Natural killer cell (primary cell): ENCODE measurements at regions of chr21 and their contacts with region 1.

Region 1: GRCh38 chr21:35051287-35051818 is 2.3 kb upstream of the RUNX1 start:
- DNase-seq: peak; percentile 81 to 93
- ATAC-seq: peak; percentile 46 to 69 (median 59)
- H3K4me3 ChIP-seq: no peak overlapping the region
- H3K4me3 Mint-ChIP-seq: peak overlapping the region; percentile 92
- H3K27ac ChIP-seq: peak overlapping the region; percentile 57
- H3K27ac Mint-ChIP-seq: peak overlapping the region; percentile 95 to 97
- H3K4me1 ChIP-seq: peaks cover 39% of the 10 kb centered on the region
- H3K4me1 Mint-ChIP-seq: peaks cover 59 to 64% of the 10 kb centered on the region in 2 donors
- H3K27me3 ChIP-seq: no peaks in the 10 kb centered on the region
- H3K27me3 Mint-ChIP-seq: peaks cover 0 to 5% of the 10 kb centered on the region in 2 donors
- CTCF ChIP-seq: peak; percentile 71

Region 2: DNA sequence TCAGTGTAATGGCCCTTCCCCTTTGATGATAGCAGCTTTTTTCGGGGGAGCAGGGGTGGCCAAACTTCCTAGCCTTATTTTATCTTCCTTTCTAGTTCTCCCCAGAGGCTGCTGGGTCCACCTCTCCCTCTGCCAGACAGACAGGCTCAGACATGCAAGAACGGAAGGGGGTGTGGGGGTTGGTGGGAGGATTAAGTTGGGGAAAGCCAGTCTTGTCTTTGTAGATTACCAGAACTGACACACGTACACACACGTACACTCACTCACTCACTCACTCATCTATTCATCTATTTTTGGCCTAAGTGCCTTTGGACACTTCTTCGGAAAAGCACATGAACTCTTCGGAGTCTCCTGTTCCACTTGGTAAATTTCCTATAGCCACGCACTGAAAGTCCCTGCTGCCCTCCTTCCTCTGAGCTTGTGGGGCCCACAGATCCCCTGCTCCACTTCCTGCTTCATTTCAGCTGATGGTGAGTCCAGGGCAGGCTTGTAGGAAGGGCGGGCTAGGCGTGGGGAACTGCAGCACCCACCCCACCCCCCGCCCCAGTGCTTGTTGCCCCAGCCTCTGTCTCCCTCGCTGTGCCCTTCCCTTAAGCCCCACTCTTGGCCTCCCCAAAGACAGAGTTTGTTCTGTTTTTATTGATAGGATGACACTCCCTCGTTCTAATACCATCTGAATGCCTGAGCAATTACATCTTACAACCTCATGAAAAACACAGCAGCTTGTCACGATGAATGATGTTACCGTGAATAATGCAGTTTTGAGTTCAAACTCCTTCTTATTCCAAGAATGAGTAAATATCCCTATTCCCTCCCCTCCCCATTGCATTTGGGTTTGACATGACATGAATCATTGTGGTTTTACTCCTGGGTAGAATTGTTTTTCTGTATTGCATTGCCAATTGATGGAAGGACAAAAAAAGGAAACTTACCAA is 1075.0 kb before region 1 on chr21:
- intact Hi-C with region 1: loop called (anchors 5 kb)
- DNase-seq: peak; percentile 26 to 75
- ATAC-seq: peak; percentile 43 to 60 (median 53)
- H3K4me3 ChIP-seq: no peak overlapping the region
- H3K4me3 Mint-ChIP-seq: peak overlapping the region; percentile 76
- H3K27ac ChIP-seq: peak overlapping the region; percentile 95
- H3K27ac Mint-ChIP-seq: peak overlapping the region; percentile 93 to 98
- H3K4me1 ChIP-seq: peaks cover 44% of the 10 kb centered on the region
- H3K4me1 Mint-ChIP-seq: peaks cover 61 to 66% of the 10 kb centered on the region in 2 donors
- H3K27me3 ChIP-seq: no peaks in the 10 kb centered on the region
- H3K27me3 Mint-ChIP-seq: no peaks in the 10 kb centered on the region
- CTCF ChIP-seq: no peak

Region 3: GRCh38 chr21:34801519-34802132 is 249.7 kb before region 1 on chr21:
- intact Hi-C with region 1: loop called (anchors 2 kb)
- DNase-seq: peak in 1 of 2 donors; percentile 53
- ATAC-seq: peak; percentile 51 to 59 (median 54)
- H3K4me3 ChIP-seq: no peak overlapping the region
- H3K4me3 Mint-ChIP-seq: no peak overlapping the region
- H3K27ac ChIP-seq: no peak overlapping the region
- H3K27ac Mint-ChIP-seq: peak overlapping the region; percentile 70 to 78
- H3K4me1 ChIP-seq: peaks cover 6% of the 10 kb centered on the region
- H3K4me1 Mint-ChIP-seq: peaks cover 51 to 59% of the 10 kb centered on the region in 2 donors
- H3K27me3 ChIP-seq: no peaks in the 10 kb centered on the region
- H3K27me3 Mint-ChIP-seq: no peaks in the 10 kb centered on the region
- CTCF ChIP-seq: no peak

Region 4: GRCh38 chr21:34933609-34934335 is 117.6 kb before region 1 on chr21:
- intact Hi-C with region 1: loop called (anchors 1 kb)
- DNase-seq: peak in 1 of 2 donors; percentile 83
- ATAC-seq: peak; percentile 88 to 93 (median 91)
- H3K4me3 ChIP-seq: peak overlapping the region; percentile 11
- H3K4me3 Mint-ChIP-seq: peak overlapping the region; percentile 78
- H3K27ac ChIP-seq: peak overlapping the region; percentile 89
- H3K27ac Mint-ChIP-seq: peak overlapping the region; percentile 93
- H3K4me1 ChIP-seq: peaks cover 29% of the 10 kb centered on the region
- H3K4me1 Mint-ChIP-seq: peaks cover 62 to 80% of the 10 kb centered on the region in 2 donors
- H3K27me3 ChIP-seq: no peaks in the 10 kb centered on the region
- H3K27me3 Mint-ChIP-seq: no peaks in the 10 kb centered on the region
- CTCF ChIP-seq: no peak

Region 5: DNA sequence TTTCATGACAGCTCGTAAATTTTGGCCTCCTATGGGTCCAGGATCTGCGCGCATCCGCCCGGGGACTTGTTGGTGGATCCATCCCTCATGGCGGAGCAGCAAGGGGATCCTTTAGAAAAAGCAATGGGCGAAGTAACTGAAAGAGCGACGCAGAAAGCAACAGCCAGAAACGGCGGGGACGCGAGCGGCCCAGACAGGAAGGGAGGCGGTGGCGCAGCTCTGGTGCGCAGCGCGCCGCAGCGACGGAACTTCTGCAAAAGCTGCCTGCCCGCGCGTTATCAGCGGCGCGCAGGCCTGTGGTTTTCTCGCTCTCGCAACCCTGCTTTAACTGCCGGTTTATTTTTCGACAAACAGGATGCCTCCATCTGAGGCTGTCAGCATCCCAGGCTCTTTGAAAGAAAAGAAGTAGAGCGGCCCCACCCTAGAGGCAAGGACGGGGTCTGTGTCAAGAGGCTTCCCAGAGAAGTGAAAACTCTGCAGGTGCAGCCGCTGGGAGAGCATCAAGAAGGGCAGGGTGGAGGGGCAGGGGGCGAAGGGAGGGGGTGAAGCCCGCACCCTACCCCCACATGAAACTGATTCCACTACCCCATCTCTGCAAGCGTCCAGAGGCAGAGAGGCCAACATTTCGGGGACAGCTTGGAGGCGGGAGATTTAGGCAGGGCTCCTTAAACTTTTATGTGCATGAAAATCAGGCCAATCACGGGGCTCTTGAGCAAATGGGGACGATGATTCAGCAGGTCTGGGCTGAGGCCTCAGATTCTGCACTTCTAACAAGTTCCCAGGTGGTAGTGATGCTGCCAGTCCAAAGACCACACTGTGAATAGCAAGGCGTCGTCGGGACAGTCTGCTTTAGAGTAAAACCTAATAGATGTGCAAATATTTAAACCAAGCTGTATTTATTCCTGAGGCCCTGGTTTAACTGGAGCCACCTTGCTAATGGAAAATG is 24.5 kb before region 1 on chr21:
- intact Hi-C with region 1: loop called (anchors 1 kb)
- DNase-seq: peak; percentile 78 to 95
- ATAC-seq: peak; percentile 81 to 91 (median 87)
- H3K4me3 ChIP-seq: peak overlapping the region; percentile 29
- H3K4me3 Mint-ChIP-seq: peak overlapping the region; percentile 89
- H3K27ac ChIP-seq: peak overlapping the region; percentile 85
- H3K27ac Mint-ChIP-seq: peak overlapping the region; percentile 97 to 98
- H3K4me1 ChIP-seq: peaks cover 70% of the 10 kb centered on the region
- H3K4me1 Mint-ChIP-seq: peaks cover 78 to 86% of the 10 kb centered on the region in 2 donors
- H3K27me3 ChIP-seq: no peaks in the 10 kb centered on the region
- H3K27me3 Mint-ChIP-seq: no peaks in the 10 kb centered on the region
- CTCF ChIP-seq: no peak

Region 6: DNA sequence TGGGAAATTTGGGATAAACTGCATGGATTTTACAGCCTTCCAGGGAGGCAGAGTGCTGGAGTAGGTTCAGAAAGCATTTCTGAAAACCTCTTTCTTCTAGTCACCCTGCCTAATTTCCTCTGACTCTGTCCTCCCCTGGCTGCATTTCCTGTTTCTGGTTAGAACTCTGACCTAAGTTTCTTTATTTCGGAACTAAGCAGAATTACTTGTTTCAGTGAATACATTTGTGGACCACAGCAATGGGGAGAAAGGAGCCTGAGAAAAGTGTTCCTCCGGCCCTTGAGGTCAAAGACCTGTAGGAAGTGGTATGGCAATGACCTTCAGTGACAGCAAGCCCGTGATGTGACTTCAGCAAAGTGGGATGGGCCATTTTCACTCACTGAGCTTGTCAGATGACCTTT is 171.2 kb after region 1 on chr21:
- intact Hi-C with region 1: loop called (anchors 2 kb)
- DNase-seq: peak in 1 of 2 donors; percentile 32
- ATAC-seq: peak; percentile 38 to 70 (median 63)
- H3K4me3 ChIP-seq: no peak overlapping the region
- H3K4me3 Mint-ChIP-seq: peak overlapping the region; percentile 26
- H3K27ac ChIP-seq: no peak overlapping the region
- H3K27ac Mint-ChIP-seq: peak overlapping the region; percentile 5 to 79
- H3K4me1 ChIP-seq: peaks cover 30% of the 10 kb centered on the region
- H3K4me1 Mint-ChIP-seq: peaks cover 31 to 54% of the 10 kb centered on the region in 2 donors
- H3K27me3 ChIP-seq: no peaks in the 10 kb centered on the region
- H3K27me3 Mint-ChIP-seq: peaks cover 0 to 4% of the 10 kb centered on the region in 2 donors
- CTCF ChIP-seq: no peak

Region 7: DNA sequence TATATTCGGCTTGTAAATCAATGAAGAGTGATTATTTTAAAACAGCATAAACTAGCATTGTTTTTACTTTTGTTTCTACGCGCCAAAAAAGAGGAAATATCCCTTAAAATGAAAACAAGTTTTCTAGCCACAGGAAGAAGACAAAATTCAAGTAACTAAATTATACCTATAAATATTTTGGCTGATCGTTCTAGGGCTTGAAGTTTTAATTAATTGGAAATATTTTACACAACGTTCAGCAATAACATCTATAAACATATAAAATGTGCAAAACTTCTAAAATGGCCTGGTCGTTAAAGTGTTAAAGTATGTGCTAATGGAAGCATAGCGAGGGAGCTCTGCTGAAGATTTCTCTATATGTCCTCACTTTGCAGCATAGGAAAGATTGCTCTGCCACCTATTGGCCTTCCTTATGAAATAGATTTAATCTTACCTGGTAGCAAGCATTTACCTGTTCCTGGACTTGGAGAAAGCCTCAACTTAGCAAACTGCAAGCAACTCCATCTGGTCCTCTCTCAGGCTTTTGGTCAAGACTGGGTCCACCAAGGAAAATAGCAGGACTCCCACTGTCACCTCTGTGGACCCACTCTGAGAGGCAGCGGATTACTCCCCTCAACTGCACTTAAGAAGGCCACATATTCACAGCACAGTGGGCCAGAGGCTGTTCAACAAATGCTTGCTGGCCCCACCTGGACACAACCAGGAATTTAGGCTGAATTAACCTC is 349.0 kb after region 1 on chr21:
- intact Hi-C with region 1: loop called (anchors 1 kb)
- DNase-seq: peak; percentile 15 to 81
- ATAC-seq: peak; percentile 64 to 83 (median 77)
- H3K4me3 ChIP-seq: no peak overlapping the region
- H3K4me3 Mint-ChIP-seq: no peak overlapping the region
- H3K27ac ChIP-seq: no peak overlapping the region
- H3K27ac Mint-ChIP-seq: no peak overlapping the region
- H3K4me1 ChIP-seq: no peaks in the 10 kb centered on the region
- H3K4me1 Mint-ChIP-seq: no peaks in the 10 kb centered on the region
- H3K27me3 ChIP-seq: no peaks in the 10 kb centered on the region
- H3K27me3 Mint-ChIP-seq: peaks cover 17 to 33% of the 10 kb centered on the region in 2 donors
- CTCF ChIP-seq: peak; percentile 62

Region 8: GRCh38 chr21:35579520-35580293 is 528.4 kb after region 1 on chr21:
- intact Hi-C with region 1: no loop called
- DNase-seq: no peak
- ATAC-seq: no peak
- H3K4me3 ChIP-seq: no peak overlapping the region
- H3K4me3 Mint-ChIP-seq: no peak overlapping the region
- H3K27ac ChIP-seq: no peak overlapping the region
- H3K27ac Mint-ChIP-seq: no peak overlapping the region
- H3K4me1 ChIP-seq: no peaks in the 10 kb centered on the region
- H3K4me1 Mint-ChIP-seq: no peaks in the 10 kb centered on the region
- H3K27me3 ChIP-seq: no peaks in the 10 kb centered on the region
- H3K27me3 Mint-ChIP-seq: peaks cover 25 to 70% of the 10 kb centered on the region in 2 donors
- CTCF ChIP-seq: no peak